Caco-2 (cell line): ENCODE measurements at regions of chr12 and their contacts with region 1.

Region 1: GRCh38 chr12:8544295-8544694 is 3.6 kb upstream of the CLEC4E start:
- DNase-seq: peak; percentile 72 to 84
- H3K4me3 ChIP-seq: no peak overlapping the region
- H3K4me3 Mint-ChIP-seq: no peak overlapping the region
- H3K27ac Mint-ChIP-seq: no peak overlapping the region
- H3K4me1 ChIP-seq: no peaks in the 10 kb centered on the region
- H3K4me1 Mint-ChIP-seq: no peaks in the 10 kb centered on the region
- H3K27me3 ChIP-seq: no peaks in the 10 kb centered on the region
- H3K27me3 Mint-ChIP-seq: peaks cover 28% of the 10 kb centered on the region
- CTCF ChIP-seq: peak; percentile 94 to 98

Region 2: GRCh38 chr12:6647083-6647604 is 1897.2 kb before region 1 on chr12 and contains the start of gene ACRBP:
- CTCF ChIA-PET with region 1: no interaction called
- POLR2A ChIA-PET with region 1: no interaction called
- intact Hi-C with region 1: no loop called
- DNase-seq: peak; percentile 62 to 75
- H3K4me3 ChIP-seq: peak within 1 kb of the TSS; percentile 26
- H3K4me3 Mint-ChIP-seq: peak within 1 kb of the TSS; percentile 79
- H3K27ac Mint-ChIP-seq: peak within 1 kb of the TSS; percentile 32
- H3K4me1 ChIP-seq: no peaks in the 10 kb centered on the region
- H3K4me1 Mint-ChIP-seq: peaks cover 7% of the 10 kb centered on the region
- H3K27me3 ChIP-seq: no peaks in the 10 kb centered on the region
- H3K27me3 Mint-ChIP-seq: peaks cover 6% of the 10 kb centered on the region
- CTCF ChIP-seq: no peak
- total RNA-seq, gene ACRBP: 0.73 and 1.3 TPM in 2 replicates

Region 3: DNA sequence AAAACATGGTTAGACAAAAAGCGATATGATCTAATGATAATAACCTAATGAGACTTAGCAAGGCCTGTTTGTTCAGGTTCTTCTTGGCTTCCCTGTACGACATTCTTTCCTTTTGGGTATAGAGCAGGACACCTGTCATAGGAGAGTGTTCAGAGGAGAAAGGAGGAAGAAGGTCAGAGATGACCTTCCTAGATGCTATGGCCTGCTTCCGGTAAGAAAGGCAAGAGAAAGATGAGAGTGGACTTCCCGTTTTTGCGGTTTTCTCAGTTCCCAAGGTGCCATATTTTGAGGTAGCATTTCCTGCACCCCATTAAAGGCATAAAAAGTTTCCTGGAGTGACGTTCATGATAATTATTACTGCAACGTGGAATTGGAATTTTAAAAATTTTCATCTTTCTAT is 12.2 kb before region 1 on chr12:
- CTCF ChIA-PET with region 1: interaction called, 14 read pairs
- POLR2A ChIA-PET with region 1: no interaction called
- intact Hi-C with region 1: no loop called
- DNase-seq: no peak
- H3K4me3 ChIP-seq: no peak overlapping the region
- H3K4me3 Mint-ChIP-seq: no peak overlapping the region
- H3K27ac Mint-ChIP-seq: no peak overlapping the region
- H3K4me1 ChIP-seq: no peaks in the 10 kb centered on the region
- H3K4me1 Mint-ChIP-seq: no peaks in the 10 kb centered on the region
- H3K27me3 ChIP-seq: no peaks in the 10 kb centered on the region
- H3K27me3 Mint-ChIP-seq: peaks cover 39% of the 10 kb centered on the region
- CTCF ChIP-seq: no peak

Region 4: GRCh38 chr12:8590842-8591550 is 46.7 kb after region 1 on chr12:
- CTCF ChIA-PET with region 1: interaction called, 10 read pairs
- POLR2A ChIA-PET with region 1: no interaction called
- intact Hi-C with region 1: loop called (anchors 1 kb)
- DNase-seq: peak; percentile 20 to 45
- H3K4me3 ChIP-seq: no peak overlapping the region
- H3K4me3 Mint-ChIP-seq: no peak overlapping the region
- H3K27ac Mint-ChIP-seq: no peak overlapping the region
- H3K4me1 ChIP-seq: no peaks in the 10 kb centered on the region
- H3K4me1 Mint-ChIP-seq: peaks cover 8% of the 10 kb centered on the region
- H3K27me3 ChIP-seq: no peaks in the 10 kb centered on the region; the same call in 1 of the 2 replicates
- H3K27me3 Mint-ChIP-seq: peaks cover 2% of the 10 kb centered on the region
- CTCF ChIP-seq: no peak

Region 5: GRCh38 chr12:8609061-8609570 is 64.8 kb after region 1 on chr12:
- CTCF ChIA-PET with region 1: interaction called, 111 read pairs
- POLR2A ChIA-PET with region 1: no interaction called
- intact Hi-C with region 1: loop called (anchors 1 kb)
- DNase-seq: peak in 1 of 2 experiments; percentile 57
- H3K4me3 ChIP-seq: no peak overlapping the region
- H3K4me3 Mint-ChIP-seq: no peak overlapping the region
- H3K27ac Mint-ChIP-seq: no peak overlapping the region
- H3K4me1 ChIP-seq: no peaks in the 10 kb centered on the region
- H3K4me1 Mint-ChIP-seq: no peaks in the 10 kb centered on the region
- H3K27me3 ChIP-seq: no peaks in the 10 kb centered on the region
- H3K27me3 Mint-ChIP-seq: peaks cover 22% of the 10 kb centered on the region
- CTCF ChIP-seq: peak; percentile 89 to 97

Region 6: GRCh38 chr12:9039397-9039977 is 495.2 kb after region 1 on chr12:
- CTCF ChIA-PET with region 1: no interaction called
- POLR2A ChIA-PET with region 1: no interaction called
- intact Hi-C with region 1: loop called (anchors 5 kb)
- DNase-seq: peak in 1 of 2 experiments; percentile 55
- H3K4me3 ChIP-seq: no peak overlapping the region
- H3K4me3 Mint-ChIP-seq: no peak overlapping the region
- H3K27ac Mint-ChIP-seq: no peak overlapping the region
- H3K4me1 ChIP-seq: no peaks in the 10 kb centered on the region
- H3K4me1 Mint-ChIP-seq: no peaks in the 10 kb centered on the region
- H3K27me3 ChIP-seq: 0 out of 2 replicates have a peak, but pooled peaks cover 1% of the 10 kb centered on the region
- H3K27me3 Mint-ChIP-seq: peaks cover 14% of the 10 kb centered on the region
- CTCF ChIP-seq: peak; percentile 70 to 89

Region 7: GRCh38 chr12:9049520-9050133 is 505.3 kb after region 1 on chr12:
- CTCF ChIA-PET with region 1: interaction called, 11 read pairs
- POLR2A ChIA-PET with region 1: no interaction called
- intact Hi-C with region 1: no loop called
- DNase-seq: peak in 1 of 2 experiments; percentile 56
- H3K4me3 ChIP-seq: no peak overlapping the region
- H3K4me3 Mint-ChIP-seq: no peak overlapping the region
- H3K27ac Mint-ChIP-seq: no peak overlapping the region
- H3K4me1 ChIP-seq: no peaks in the 10 kb centered on the region
- H3K4me1 Mint-ChIP-seq: no peaks in the 10 kb centered on the region
- H3K27me3 ChIP-seq: no peaks in the 10 kb centered on the region
- H3K27me3 Mint-ChIP-seq: peaks cover 33% of the 10 kb centered on the region
- CTCF ChIP-seq: peak; percentile 68 to 82